BJ (cell line): ENCODE measurements at regions of chr13 and their contacts with region 1.

Region 1: DNA sequence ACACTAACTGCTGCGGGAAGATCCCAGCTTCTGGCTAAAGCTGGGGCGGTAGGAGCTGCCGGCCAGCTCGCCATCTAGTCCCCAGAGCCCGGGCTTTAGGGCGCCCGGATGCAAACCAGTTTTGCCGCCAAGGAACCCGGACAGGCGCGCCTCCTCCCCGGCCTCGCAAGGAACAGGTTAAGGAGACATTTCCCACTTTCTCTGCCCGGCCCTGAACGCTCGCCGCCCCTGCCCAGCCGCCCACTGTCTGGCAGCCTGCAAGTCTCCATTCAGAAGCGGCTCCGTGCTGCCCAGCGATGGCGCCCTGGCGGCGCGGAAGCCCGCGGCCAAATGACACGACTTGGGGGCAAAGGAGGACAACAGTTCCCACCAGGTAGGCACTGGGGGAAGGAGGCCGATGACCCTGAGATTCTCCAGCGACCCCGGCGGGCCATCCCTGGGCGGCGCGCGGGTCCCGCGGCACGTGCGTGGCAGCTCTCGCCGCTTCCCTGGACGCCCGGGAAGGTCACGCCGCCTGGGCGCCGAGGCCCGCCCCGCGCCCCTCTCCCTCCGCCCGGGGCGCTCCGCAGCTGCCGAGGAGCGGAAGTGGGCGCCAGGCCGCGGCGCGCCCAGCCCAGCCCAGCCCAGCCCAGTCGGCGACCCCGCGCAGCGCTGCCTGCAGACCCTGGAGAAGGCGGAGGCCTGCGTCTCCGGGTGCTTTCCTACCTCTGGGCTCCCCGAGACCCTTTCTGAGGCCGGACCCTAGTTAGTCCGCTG is 42.2 kb upstream of the HNRNPA1L2 start:
- DNase-seq: no peak
- H3K4me3 ChIP-seq: peak overlapping the region; percentile 60
- H3K27me3 ChIP-seq: no peaks in the 10 kb centered on the region
- CTCF ChIP-seq: no peak

Region 2: DNA sequence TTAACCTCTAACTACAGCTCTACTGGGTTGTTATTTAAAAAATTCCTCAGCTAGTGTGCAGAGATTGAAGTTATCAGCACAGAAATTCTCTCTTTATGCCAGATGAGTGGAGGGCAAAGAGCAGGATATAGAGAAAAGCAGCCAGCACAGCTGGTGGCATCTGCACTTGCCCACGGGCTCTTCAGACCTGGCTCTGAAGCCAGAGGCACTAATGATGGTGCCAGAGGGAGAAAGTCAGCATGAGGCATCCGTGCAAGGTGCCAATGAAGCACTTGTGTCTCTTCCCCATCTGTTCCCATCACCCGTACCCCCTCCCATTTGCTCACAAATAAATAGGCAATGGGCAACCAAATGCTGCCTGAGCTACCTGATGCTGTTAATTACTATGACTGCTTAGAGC is 567.5 kb after region 1 on chr13:
- CTCF ChIA-PET with region 1: no interaction called
- POLR2A ChIA-PET with region 1: interaction called, 13 read pairs
- DNase-seq: no peak
- H3K4me3 ChIP-seq: no peak overlapping the region
- H3K27me3 ChIP-seq: no peaks in the 10 kb centered on the region
- CTCF ChIP-seq: no peak